K562 (cell line): ENCODE measurements at regions of chr2 and their contacts with region 1.

Region 1: DNA sequence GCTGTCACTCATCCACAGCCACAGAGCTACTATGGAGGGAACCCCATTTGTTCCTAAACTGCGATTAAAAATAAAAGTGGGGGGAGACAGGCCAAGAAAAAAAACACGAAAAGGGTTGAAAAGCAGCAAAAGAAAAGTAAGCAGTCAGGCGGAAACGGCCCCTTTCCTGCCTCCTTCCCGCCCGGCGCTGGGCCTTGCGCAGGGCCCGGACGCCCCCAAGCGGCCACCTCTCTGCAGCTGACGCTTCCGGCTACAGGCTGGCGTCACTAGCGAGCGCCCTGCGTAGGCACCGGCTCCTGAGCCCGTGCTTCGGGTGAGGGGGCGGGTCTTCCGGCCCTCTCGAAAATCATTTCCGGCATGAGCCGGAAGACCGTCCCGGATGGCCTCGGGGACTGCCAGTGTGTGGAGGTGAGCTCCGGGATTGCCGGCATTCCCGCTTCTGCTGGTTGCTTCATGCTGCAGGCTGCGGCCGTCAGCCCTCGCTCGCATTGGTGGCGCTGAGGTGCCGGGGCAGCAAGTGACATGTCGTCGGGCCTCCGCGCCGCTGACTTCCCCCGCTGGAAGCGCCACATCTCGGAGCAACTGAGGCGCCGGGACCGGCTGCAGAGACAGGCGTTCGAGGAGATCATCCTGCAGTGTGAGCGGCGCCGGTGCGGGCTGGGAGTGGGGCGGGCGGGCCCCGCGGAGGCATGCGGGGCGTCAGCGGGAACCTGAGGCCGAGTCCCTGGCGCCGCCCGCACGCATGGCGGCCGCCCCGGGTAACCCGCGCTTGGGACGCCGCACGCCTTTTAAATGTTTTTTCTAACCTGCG is at the start of gene ATG16L1:
- DNase-seq: peak; percentile 93 to 94 (median 94)
- ATAC-seq: peak; percentile 98
- H3K4me3 ChIP-seq: peak within 1 kb of the TSS; percentile 82
- H3K27ac ChIP-seq: peak within 1 kb of the TSS; percentile 79
- H3K4me1 ChIP-seq: peaks cover 0 to 7% of the 10 kb centered on the region in 2 experiments; a peak in 2 of 5 replicates
- H3K27me3 ChIP-seq: no peaks in the 10 kb centered on the region
- CTCF ChIP-seq: peak; percentile 93 to 95 (median 93)
- EP300 ChIP-seq: no peak
- POLR2A ChIP-seq: peak; percentile 85
- RAD21 ChIP-seq: peak; percentile 97 to 99
- polyA plus RNA-seq, gene ATG16L1: 6.4 to 7.0 TPM

Region 2: DNA sequence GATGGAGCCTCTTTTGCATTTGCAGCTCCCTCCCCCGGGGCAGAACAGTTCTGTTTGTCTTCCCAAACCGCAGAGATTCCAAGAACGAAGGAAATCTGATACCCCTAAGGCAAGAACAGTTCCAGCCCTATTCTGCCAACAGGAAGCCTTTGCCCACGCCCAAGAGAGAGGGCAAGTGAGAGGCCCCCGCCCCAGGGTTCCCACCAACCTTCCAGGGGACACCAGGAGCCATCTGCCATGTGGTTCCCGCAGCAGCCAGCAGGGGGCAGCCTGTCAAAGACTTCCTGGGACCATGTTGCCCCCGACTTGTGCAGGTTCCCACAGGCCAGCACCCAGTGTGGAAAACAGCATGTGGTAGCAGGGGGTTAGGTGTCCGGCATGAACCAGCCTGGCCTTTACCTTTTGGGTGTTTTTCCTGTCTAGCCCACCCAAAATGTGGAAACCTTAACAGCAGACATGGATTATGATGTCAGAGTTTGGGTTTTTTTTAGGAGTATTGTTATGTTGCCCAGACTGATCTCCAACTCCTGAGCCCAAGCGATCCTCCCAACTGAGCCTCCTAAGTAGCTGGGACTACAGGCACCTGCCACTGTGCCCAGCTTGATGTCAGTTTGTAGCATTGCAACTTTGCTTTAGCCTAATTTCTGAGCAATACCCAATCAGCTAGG is 639.8 kb before region 1 on chr2:
- CTCF ChIA-PET with region 1: no interaction called
- POLR2A ChIA-PET with region 1: no interaction called
- in situ Hi-C with region 1: loop called (anchors 25 kb)
- intact Hi-C with region 1: no loop called
- DNase-seq: peak; percentile 62 to 71 (median 70)
- ATAC-seq: peak; percentile 95
- H3K4me3 ChIP-seq: no peak overlapping the region
- H3K27ac ChIP-seq: no peak overlapping the region
- H3K4me1 ChIP-seq: peaks cover 0 to 3% of the 10 kb centered on the region in 2 experiments; a peak in 3 of 5 replicates
- H3K27me3 ChIP-seq: no peaks in the 10 kb centered on the region
- CTCF ChIP-seq: peak; percentile 72 to 87 (median 72)
- EP300 ChIP-seq: no peak
- POLR2A ChIP-seq: no peak
- RAD21 ChIP-seq: peak; percentile 35 to 61; a peak in 3 of 4 replicates

Region 3: GRCh38 chr2:232854082-232854481 is 397.4 kb before region 1 on chr2:
- CTCF ChIA-PET with region 1: interaction called, 3 read pairs
- POLR2A ChIA-PET with region 1: no interaction called
- in situ Hi-C with region 1: no loop called
- intact Hi-C with region 1: loop called (anchors 5 kb)
- DNase-seq: peak; percentile 16 to 89 (median 16)
- ATAC-seq: peak; percentile 84
- H3K4me3 ChIP-seq: no peak overlapping the region
- H3K27ac ChIP-seq: no peak overlapping the region
- H3K4me1 ChIP-seq: peaks cover 7 to 11% of the 10 kb centered on the region in 2 experiments
- H3K27me3 ChIP-seq: no peaks in the 10 kb centered on the region
- CTCF ChIP-seq: no peak
- EP300 ChIP-seq: no peak
- POLR2A ChIP-seq: no peak
- RAD21 ChIP-seq: no peak

Region 4: GRCh38 chr2:232925153-232925820 is 326.2 kb before region 1 on chr2:
- CTCF ChIA-PET with region 1: no interaction called
- POLR2A ChIA-PET with region 1: no interaction called
- in situ Hi-C with region 1: no loop called
- intact Hi-C with region 1: no loop called
- DNase-seq: no peak
- ATAC-seq: no peak
- H3K4me3 ChIP-seq: no peak overlapping the region
- H3K27ac ChIP-seq: no peak overlapping the region
- H3K4me1 ChIP-seq: peaks cover 0 to 16% of the 10 kb centered on the region in 2 experiments; a peak in 2 of 5 replicates
- H3K27me3 ChIP-seq: peaks cover 9 to 54% of the 10 kb centered on the region in 2 experiments; a peak in 4 of 5 replicates
- CTCF ChIP-seq: no peak
- EP300 ChIP-seq: no peak
- POLR2A ChIP-seq: no peak
- RAD21 ChIP-seq: no peak

Region 5: DNA sequence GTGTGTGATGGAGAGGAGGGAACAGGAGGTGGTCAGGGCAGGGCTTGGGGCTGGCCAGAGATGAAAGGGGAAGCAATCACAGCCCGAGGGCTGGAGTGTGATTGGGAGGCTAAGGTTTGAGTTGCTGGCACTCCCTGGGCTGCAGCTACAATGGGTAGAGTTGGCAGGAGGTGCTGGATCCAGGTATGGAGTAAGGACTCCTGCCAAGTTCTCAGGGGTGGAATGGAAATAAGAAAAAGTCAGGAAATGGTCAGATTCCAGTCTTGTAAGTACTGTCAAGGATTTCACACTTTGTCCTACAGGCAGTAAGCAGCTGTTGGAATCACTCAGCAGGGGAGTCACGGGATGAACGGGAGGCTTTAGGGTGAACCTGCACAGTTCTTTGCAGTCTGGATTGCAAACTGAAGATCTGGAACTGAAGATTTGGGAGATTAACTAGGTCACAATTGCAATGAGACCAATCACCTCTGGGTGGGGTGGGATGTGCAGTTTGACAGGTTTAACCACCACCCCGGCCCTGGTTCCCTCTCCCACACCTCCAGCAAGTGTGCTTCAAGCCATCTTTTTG is 202.2 kb before region 1 on chr2:
- CTCF ChIA-PET with region 1: no interaction called
- POLR2A ChIA-PET with region 1: no interaction called
- in situ Hi-C with region 1: no loop called
- intact Hi-C with region 1: loop called (anchors 10 kb)
- DNase-seq: no peak
- ATAC-seq: no peak
- H3K4me3 ChIP-seq: no peak overlapping the region
- H3K27ac ChIP-seq: no peak overlapping the region
- H3K4me1 ChIP-seq: peaks cover 0 to 11% of the 10 kb centered on the region in 2 experiments; a peak in 3 of 5 replicates
- H3K27me3 ChIP-seq: peaks cover 0 to 21% of the 10 kb centered on the region in 2 experiments; a peak in 2 of 5 replicates
- CTCF ChIP-seq: no peak
- EP300 ChIP-seq: no peak
- POLR2A ChIP-seq: no peak
- RAD21 ChIP-seq: no peak; a peak in 1 of 4 replicates

Region 6: GRCh38 chr2:233129351-233129987 is 122.0 kb before region 1 on chr2:
- CTCF ChIA-PET with region 1: no interaction called
- POLR2A ChIA-PET with region 1: no interaction called
- in situ Hi-C with region 1: no loop called
- intact Hi-C with region 1: loop called (anchors 1 kb)
- DNase-seq: peak in 2 of 4 experiments; percentile 19 to 25
- ATAC-seq: peak; percentile 76
- H3K4me3 ChIP-seq: no peak overlapping the region
- H3K27ac ChIP-seq: no peak overlapping the region
- H3K4me1 ChIP-seq: peaks cover 0 to 3% of the 10 kb centered on the region in 2 experiments; a peak in 2 of 5 replicates
- H3K27me3 ChIP-seq: no peaks in the 10 kb centered on the region; a peak in 1 of 5 replicates
- CTCF ChIP-seq: peak; percentile 43 to 57 (median 50); a peak in 5 of 6 replicates
- EP300 ChIP-seq: no peak
- POLR2A ChIP-seq: no peak
- RAD21 ChIP-seq: peak in 1 of 2 experiments; percentile 37; a peak in 2 of 4 replicates

Region 7: GRCh38 chr2:233178994-233179847 is 72.3 kb before region 1 on chr2:
- CTCF ChIA-PET with region 1: no interaction called
- POLR2A ChIA-PET with region 1: no interaction called
- in situ Hi-C with region 1: no loop called
- intact Hi-C with region 1: loop called (anchors 10 kb)
- DNase-seq: peak; percentile 20 to 46 (median 36)
- ATAC-seq: peak; percentile 77
- H3K4me3 ChIP-seq: peak overlapping the region; percentile 35
- H3K27ac ChIP-seq: peak overlapping the region; percentile 82
- H3K4me1 ChIP-seq: peaks cover 15 to 17% of the 10 kb centered on the region in 2 experiments
- H3K27me3 ChIP-seq: no peaks in the 10 kb centered on the region
- CTCF ChIP-seq: no peak
- EP300 ChIP-seq: no peak
- POLR2A ChIP-seq: no peak; the same call in 1 of the 2 replicates
- RAD21 ChIP-seq: no peak